Activated B cell treated with CpG ODN at 0.5 μM for 24 hours (primary cell): ENCODE measurements at regions of chr3 and their contacts with region 1.

Region 1: DNA sequence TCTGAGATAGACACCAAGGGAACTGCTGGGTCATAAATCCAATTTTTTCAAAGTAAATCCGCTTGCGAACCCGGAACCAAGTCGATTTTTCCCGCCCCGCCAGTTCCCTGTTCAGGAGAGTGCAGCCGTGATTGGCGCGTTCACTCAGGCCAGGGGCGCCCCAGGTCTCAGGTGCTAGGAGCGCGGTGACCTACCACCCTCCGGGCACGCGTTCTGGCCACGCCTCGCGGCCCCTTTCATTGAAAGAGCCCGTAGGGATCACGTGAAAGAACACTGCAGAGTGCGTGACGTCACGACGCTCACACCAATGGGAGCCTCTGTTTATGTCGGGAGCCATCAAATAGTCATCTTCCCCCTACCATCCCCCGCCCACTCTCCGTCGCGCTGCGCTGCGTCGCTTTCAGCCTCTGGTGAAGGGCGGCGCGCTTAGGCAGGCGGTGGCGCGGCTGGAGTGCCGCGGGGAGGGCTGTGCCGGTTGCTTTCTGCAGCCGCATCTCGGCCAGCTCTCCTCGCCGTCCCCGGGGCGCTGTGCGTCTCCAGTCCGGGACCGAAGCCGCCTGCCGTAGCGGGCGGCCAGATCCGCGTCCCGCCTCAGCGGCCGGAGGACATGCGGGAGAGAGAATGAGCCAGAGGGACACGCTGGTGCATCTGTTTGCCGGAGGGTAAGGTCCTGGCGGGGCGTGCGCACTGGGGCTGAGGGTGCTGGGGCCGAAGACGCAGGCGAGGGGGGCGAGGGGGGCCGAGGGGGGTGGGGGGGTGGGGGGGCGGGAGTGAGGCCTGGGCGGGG is at the start of gene SLC25A36:
- DNase-seq: peak; percentile 86
- ATAC-seq: peak; percentile 96
- H3K4me3 Mint-ChIP-seq: peak within 1 kb of the TSS; percentile 96
- H3K27ac Mint-ChIP-seq: peak within 1 kb of the TSS; percentile 96
- H3K4me1 Mint-ChIP-seq: peaks cover 37% of the 10 kb centered on the region
- H3K27me3 Mint-ChIP-seq: no peaks in the 10 kb centered on the region
- CTCF ChIP-seq: no peak
- total RNA-seq, gene SLC25A36: 40.4 and 45.7 TPM in 2 replicates

Region 2: GRCh38 chr3:139389458-139390209 is 1552.0 kb before region 1 on chr3 and contains the start of gene COPB2:
- CTCF ChIA-PET with region 1: no interaction called
- POLR2A ChIA-PET with region 1: interaction called, 4 read pairs
- intact Hi-C with region 1: loop called (anchors 1 kb)
- DNase-seq: peak; percentile 99
- ATAC-seq: peak; percentile 96
- H3K4me3 Mint-ChIP-seq: peak within 1 kb of the TSS; percentile 91
- H3K27ac Mint-ChIP-seq: peak within 1 kb of the TSS; percentile 94
- H3K4me1 Mint-ChIP-seq: peaks cover 45% of the 10 kb centered on the region
- H3K27me3 Mint-ChIP-seq: no peaks in the 10 kb centered on the region
- CTCF ChIP-seq: no peak
- total RNA-seq, gene COPB2: 87.0 and 91.4 TPM in 2 replicates

Region 3: DNA sequence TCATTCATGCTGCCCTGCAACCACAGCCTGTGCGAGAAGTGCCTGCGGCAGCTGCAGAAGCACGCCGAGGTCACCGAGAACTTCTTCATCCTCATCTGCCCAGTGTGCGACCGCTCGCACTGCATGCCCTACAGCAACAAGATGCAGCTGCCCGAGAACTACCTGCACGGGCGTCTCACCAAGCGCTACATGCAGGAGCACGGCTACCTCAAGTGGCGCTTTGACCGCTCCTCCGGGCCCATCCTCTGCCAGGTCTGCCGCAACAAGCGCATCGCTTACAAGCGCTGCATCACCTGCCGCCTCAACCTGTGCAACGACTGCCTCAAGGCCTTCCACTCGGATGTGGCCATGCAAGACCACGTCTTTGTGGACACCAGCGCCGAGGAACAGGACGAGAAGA is 259.0 kb before region 1 on chr3:
- CTCF ChIA-PET with region 1: no interaction called
- POLR2A ChIA-PET with region 1: no interaction called
- intact Hi-C with region 1: no loop called
- DNase-seq: no peak
- ATAC-seq: no peak
- H3K4me3 Mint-ChIP-seq: no peak overlapping the region
- H3K27ac Mint-ChIP-seq: no peak overlapping the region
- H3K4me1 Mint-ChIP-seq: no peaks in the 10 kb centered on the region
- H3K27me3 Mint-ChIP-seq: no peaks in the 10 kb centered on the region
- CTCF ChIP-seq: no peak

Region 4: GRCh38 chr3:140816372-140817195 is 125.0 kb before region 1 on chr3:
- CTCF ChIA-PET with region 1: no interaction called
- POLR2A ChIA-PET with region 1: interaction called, 3 read pairs
- intact Hi-C with region 1: loop called (anchors 1 kb)
- DNase-seq: no peak
- ATAC-seq: peak; percentile 96
- H3K4me3 Mint-ChIP-seq: peak overlapping the region; percentile 0
- H3K27ac Mint-ChIP-seq: peak overlapping the region; percentile 12
- H3K4me1 Mint-ChIP-seq: peaks cover 24% of the 10 kb centered on the region
- H3K27me3 Mint-ChIP-seq: peaks cover 2% of the 10 kb centered on the region
- CTCF ChIP-seq: no peak

Region 5: DNA sequence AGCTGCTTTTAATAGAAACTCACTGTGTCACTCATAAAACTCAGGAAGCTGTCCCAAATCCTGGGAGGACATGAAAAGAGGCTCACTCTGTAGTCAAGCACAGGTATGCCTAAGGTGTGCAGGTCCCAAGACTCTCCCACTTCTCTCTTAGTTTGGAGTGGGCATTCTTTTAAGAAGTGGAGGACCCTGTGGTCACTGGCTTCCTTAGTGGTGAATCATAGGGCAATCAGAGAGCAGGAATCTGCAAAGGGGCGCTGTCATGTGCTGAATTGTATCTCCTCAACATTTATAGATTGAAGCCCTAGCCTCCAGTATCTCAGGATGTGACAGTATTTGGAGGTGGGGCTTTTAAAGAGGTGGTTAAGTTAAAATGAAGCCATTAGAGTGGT is 379.5 kb after region 1 on chr3:
- CTCF ChIA-PET with region 1: no interaction called
- POLR2A ChIA-PET with region 1: no interaction called
- intact Hi-C with region 1: no loop called
- DNase-seq: no peak
- ATAC-seq: no peak
- H3K4me3 Mint-ChIP-seq: no peak overlapping the region
- H3K27ac Mint-ChIP-seq: no peak overlapping the region
- H3K4me1 Mint-ChIP-seq: peaks cover 14% of the 10 kb centered on the region
- H3K27me3 Mint-ChIP-seq: no peaks in the 10 kb centered on the region
- CTCF ChIP-seq: no peak

Region 6: GRCh38 chr3:141370065-141370533 is 428.5 kb after region 1 on chr3:
- CTCF ChIA-PET with region 1: no interaction called
- POLR2A ChIA-PET with region 1: no interaction called
- intact Hi-C with region 1: loop called (anchors 1 kb)
- DNase-seq: no peak
- ATAC-seq: peak; percentile 99
- H3K4me3 Mint-ChIP-seq: no peak overlapping the region
- H3K27ac Mint-ChIP-seq: peak overlapping the region; percentile 15
- H3K4me1 Mint-ChIP-seq: peaks cover 13% of the 10 kb centered on the region
- H3K27me3 Mint-ChIP-seq: no peaks in the 10 kb centered on the region
- CTCF ChIP-seq: no peak

Region 7: DNA sequence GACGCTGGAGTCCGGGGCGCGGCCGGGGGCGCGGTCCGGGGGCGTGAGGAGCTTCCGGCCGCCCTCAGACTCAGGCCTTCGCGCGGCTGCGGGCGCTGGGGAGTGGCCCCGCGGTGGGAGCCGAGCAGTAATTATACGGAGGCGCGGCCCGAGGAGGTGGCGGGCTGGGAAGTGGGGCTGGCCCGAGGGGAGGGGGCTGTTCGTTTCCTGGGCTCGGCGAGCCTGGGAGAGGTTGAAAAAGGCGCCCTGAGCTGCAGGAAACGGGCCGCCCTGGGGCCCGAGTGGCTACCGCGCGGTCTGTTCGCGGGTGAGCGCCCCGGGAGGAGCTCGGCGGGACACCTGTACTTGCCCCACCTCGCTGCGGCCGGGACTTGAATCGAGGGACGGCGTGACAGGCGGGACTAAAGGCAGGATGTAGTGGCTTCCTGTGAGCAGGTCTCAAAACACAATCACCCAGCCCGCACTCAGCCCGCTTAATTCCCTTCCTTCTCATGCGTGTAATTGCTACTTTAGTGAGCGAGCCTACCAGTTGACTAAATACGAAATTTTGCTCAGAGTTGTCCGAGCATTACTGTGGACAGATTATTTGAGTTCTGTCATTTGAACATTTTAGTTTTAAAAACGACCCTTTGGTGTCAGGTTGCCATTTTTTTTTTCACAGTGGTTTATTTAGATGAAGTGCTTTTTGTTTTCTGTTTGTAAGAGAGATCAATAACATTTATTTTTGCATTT is 546.1 kb after region 1 on chr3:
- CTCF ChIA-PET with region 1: no interaction called
- POLR2A ChIA-PET with region 1: interaction called, 3 read pairs
- intact Hi-C with region 1: loop called (anchors 5 kb)
- DNase-seq: no peak
- ATAC-seq: peak; percentile 73
- H3K4me3 Mint-ChIP-seq: peak overlapping the region; percentile 84
- H3K27ac Mint-ChIP-seq: peak overlapping the region; percentile 92
- H3K4me1 Mint-ChIP-seq: peaks cover 76% of the 10 kb centered on the region
- H3K27me3 Mint-ChIP-seq: no peaks in the 10 kb centered on the region
- CTCF ChIP-seq: no peak